ENCODE measurements at regions of chr11 and their contacts with region 1.

Region 1: GRCh38 chr11:87421422-87421821 is 383.7 kb downstream of the TMEM135 start:
- DNase-seq: peak; percentile 56
- H3K4me3 ChIP-seq: peak overlapping the region in 1 of 2 experiments; percentile 29; a peak in 1 of 4 replicates
- H3K27ac ChIP-seq: no peak overlapping the region
- H3K4me1 ChIP-seq: 0 out of 4 replicates have a peak, but pooled peaks cover 0 to 10% of the 10 kb centered on the region in 2 experiments
- H3K27me3 ChIP-seq: no peaks in the 10 kb centered on the region
- CTCF ChIP-seq: peak; percentile 75
- EP300 ChIP-seq: no peak
- RAD21 ChIP-seq: peak; percentile 71

Region 2: DNA sequence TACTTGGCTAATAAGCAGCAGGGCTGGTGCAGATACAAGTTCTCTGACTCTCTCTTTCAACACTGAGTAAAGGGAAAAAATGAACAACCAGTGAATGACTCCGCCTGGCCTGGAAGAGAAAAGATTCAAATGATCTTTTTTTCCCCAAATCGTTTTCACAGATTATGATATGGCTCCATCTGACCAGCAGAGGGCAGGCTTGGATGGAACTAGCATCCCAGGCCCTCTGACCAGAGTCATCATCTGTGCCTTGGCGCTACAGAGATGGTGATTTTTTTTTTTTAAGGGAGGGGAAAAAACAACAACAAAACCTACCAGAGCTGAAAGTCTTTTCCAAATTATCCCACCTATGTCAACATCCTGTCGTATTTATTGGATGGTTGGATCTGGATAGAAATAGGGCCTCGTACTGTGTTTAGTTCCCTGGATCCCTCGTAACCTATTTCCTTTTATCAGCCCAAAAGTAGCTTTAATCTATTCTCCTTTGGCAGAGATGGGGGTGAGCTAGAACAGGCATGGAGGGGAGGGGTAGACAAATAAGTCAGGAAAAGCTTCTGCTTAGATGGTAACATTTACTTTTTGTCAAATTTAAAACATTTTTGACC is 551.4 kb before region 1 on chr11:
- CTCF ChIA-PET with region 1: interaction called, 14 read pairs
- POLR2A ChIA-PET with region 1: no interaction called
- DNase-seq: peak; percentile 69
- H3K4me3 ChIP-seq: no peak overlapping the region; a peak in 1 of 4 replicates
- H3K27ac ChIP-seq: peak overlapping the region in 1 of 2 experiments; percentile 41; a peak in 2 of 4 replicates
- H3K4me1 ChIP-seq: peaks cover 0 to 23% of the 10 kb centered on the region in 2 experiments; a peak in 1 of 4 replicates
- H3K27me3 ChIP-seq: no peaks in the 10 kb centered on the region
- CTCF ChIP-seq: peak; percentile 84
- EP300 ChIP-seq: no peak
- RAD21 ChIP-seq: peak; percentile 88

Region 3: GRCh38 chr11:87352759-87353707 is 68.4 kb before region 1 on chr11:
- CTCF ChIA-PET with region 1: interaction called, 141 read pairs
- POLR2A ChIA-PET with region 1: no interaction called
- DNase-seq: peak; percentile 84
- H3K4me3 ChIP-seq: peak overlapping the region in 1 of 2 experiments; percentile 46; a peak in 2 of 4 replicates
- H3K27ac ChIP-seq: no peak overlapping the region
- H3K4me1 ChIP-seq: peaks cover 0 to 6% of the 10 kb centered on the region in 2 experiments; a peak in 1 of 4 replicates
- H3K27me3 ChIP-seq: no peaks in the 10 kb centered on the region
- CTCF ChIP-seq: peak; percentile 98
- EP300 ChIP-seq: no peak
- RAD21 ChIP-seq: peak; percentile 93

Region 4: DNA sequence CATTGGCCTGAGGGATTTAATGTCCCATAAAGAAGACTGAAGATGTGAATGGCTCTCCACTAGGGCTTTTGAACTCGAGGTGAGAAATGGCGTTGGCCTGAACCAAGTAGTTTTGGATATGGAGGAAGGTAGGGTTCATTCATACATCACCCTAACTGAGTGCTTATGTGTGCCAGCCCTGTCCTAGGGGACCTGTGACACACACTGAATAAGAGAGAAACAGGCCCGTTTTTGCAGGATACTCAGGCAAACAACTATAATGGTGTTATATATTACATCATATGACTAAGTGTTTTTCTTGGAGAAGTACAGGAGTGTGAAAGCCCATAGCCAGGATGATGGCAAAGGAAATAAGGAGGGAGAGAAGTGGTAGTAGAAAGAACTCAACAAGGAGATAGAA is 15.6 kb before region 1 on chr11:
- CTCF ChIA-PET with region 1: interaction called, 20 read pairs
- POLR2A ChIA-PET with region 1: no interaction called
- DNase-seq: no peak
- H3K4me3 ChIP-seq: no peak overlapping the region
- H3K27ac ChIP-seq: no peak overlapping the region
- H3K4me1 ChIP-seq: no peaks in the 10 kb centered on the region
- H3K27me3 ChIP-seq: no peaks in the 10 kb centered on the region
- CTCF ChIP-seq: no peak
- EP300 ChIP-seq: no peak
- RAD21 ChIP-seq: no peak

Region 5: GRCh38 chr11:87437844-87438223 is 16.4 kb after region 1 on chr11:
- CTCF ChIA-PET with region 1: interaction called, 21 read pairs
- POLR2A ChIA-PET with region 1: no interaction called
- DNase-seq: no peak
- H3K4me3 ChIP-seq: no peak overlapping the region
- H3K27ac ChIP-seq: no peak overlapping the region
- H3K4me1 ChIP-seq: peaks cover 0 to 13% of the 10 kb centered on the region in 2 experiments; a peak in 1 of 4 replicates
- H3K27me3 ChIP-seq: no peaks in the 10 kb centered on the region
- CTCF ChIP-seq: no peak
- EP300 ChIP-seq: no peak
- RAD21 ChIP-seq: no peak

Measured in SK-N-SH (cell line).